Posterior vena cava (tissue), 2 donors: ENCODE measurements at regions of chr13 and their contacts with region 1.

Region 1: DNA sequence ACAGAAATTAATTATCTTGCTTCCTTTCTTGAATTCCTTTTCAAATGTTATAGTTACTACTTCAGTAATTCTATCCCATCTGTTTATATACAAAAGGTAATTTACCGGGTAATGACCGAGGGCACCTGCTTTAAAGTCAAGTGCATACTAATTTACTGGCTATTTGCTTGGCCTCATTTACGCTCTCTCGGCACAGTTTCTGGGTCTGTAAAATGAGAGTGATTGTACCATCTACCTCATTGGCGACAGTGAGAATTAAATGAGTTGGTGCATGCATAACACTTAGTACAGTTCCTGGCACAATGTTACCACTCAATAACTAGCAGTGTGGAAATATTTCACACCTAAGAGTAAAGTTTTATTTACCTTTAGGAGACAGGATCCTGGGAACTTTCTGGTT is 111.6 kb downstream of the GGACT start:
- DNase-seq: no peak

Region 2: GRCh38 chr13:99572921-99573320 is 904.0 kb before region 1 on chr13:
- intact Hi-C with region 1: no loop called
- DNase-seq: no peak

Region 3: GRCh38 chr13:100530671-100531213 is 53.8 kb after region 1 on chr13:
- intact Hi-C with region 1: no loop called
- DNase-seq: no peak

Region 4: DNA sequence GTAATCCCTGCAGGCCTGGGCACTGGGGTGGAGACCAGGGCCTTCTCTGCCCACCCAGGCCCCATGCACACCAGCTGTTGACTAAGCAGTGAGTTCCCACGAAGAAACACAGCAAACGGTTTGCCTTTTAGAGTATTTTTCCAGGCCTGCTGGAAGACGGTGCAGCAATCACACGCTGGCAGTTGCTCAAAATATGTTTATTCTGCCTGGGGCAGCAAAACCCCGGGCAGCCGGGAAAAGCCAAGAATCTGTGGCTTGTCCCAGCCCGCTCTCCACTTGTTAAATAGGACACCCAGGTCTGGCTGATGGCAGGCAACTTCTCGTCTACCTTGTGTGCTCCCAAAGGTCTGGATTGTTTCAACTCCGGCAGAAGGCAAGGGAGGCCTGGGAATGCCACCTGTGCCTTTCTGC is 70.8 kb after region 1 on chr13:
- intact Hi-C with region 1: loop called in 1 of 2 experiments (anchors 5 kb)
- DNase-seq: no peak